Motor neuron (in vitro differentiated cells): ENCODE measurements at regions of chr1 and their contacts with region 1.

Region 1: GRCh38 chr1:17922833-17923232 is 167.7 kb downstream of the ACTL8 start:
- ATAC-seq: peak in 3 of 8 experiments; percentile 47 to 51 (median 50)
- H3K4me3 ChIP-seq: no peak overlapping the region
- H3K27ac ChIP-seq: no peak overlapping the region
- H3K4me1 ChIP-seq: peaks cover 2 to 16% of the 10 kb centered on the region in 2 donors

Region 2: GRCh38 chr1:16351466-16351993 is 1571.3 kb before region 1 on chr1:
- in situ Hi-C with region 1: no loop called
- ATAC-seq: peak in 2 of 8 experiments; percentile 1 to 4
- H3K4me3 ChIP-seq: peak overlapping the region; percentile 72 to 96 (median 87)
- H3K27ac ChIP-seq: peak overlapping the region; percentile 91 to 95
- H3K4me1 ChIP-seq: peaks cover 21% of the 10 kb centered on the region in 2 donors

Region 3: GRCh38 chr1:17551755-17552234 is 371.0 kb before region 1 on chr1:
- in situ Hi-C with region 1: no loop called
- ATAC-seq: peak; percentile 55 to 88 (median 72)
- H3K4me3 ChIP-seq: no peak overlapping the region
- H3K27ac ChIP-seq: no peak overlapping the region
- H3K4me1 ChIP-seq: peaks cover 23 to 27% of the 10 kb centered on the region in 2 donors

Region 4: DNA sequence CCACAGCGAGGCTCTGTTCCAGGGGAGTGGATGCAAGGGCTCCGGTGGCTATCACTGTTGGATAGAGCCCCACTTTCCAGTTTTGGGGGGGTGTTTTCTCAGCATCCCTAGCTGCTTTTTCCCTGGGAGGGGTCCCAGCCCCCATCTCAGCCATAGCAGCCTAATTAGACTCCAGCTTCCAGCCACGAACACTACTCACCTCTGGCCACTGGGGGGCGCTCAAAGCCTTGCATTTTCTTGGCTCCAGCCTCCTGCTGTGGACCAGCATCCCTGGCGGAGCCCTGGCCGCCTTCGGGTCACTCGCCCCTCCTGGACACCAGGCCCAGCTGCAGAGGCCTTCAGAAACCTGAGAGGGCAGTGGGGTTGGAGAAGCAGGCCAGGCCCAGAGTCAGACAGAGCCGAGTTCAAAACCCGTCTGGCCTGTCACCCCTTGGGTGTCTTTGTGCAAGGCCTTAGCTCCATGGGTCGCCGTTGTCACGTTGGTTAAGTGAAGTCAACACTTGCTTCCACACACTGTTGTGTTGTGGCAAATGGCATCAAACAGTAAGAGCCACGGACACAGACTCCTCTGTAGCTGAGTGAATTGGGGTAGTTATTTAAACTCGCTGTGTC is 261.2 kb before region 1 on chr1:
- in situ Hi-C with region 1: loop called in 1 of 9 experiments (anchors 25 kb)
- ATAC-seq: peak; percentile 54 to 88 (median 80)
- H3K4me3 ChIP-seq: no peak overlapping the region
- H3K27ac ChIP-seq: no peak overlapping the region
- H3K4me1 ChIP-seq: no peaks in the 10 kb centered on the region

Region 5: GRCh38 chr1:18091660-18092446 is 169.0 kb after region 1 on chr1:
- in situ Hi-C with region 1: loop called in 1 of 9 experiments (anchors 25 kb)
- ATAC-seq: peak; percentile 33 to 78 (median 51)
- H3K4me3 ChIP-seq: no peak overlapping the region
- H3K27ac ChIP-seq: no peak overlapping the region
- H3K4me1 ChIP-seq: peaks cover 0 to 14% of the 10 kb centered on the region in 2 donors

Region 6: GRCh38 chr1:18100491-18101063 is 177.7 kb after region 1 on chr1:
- in situ Hi-C with region 1: loop called in 2 of 9 experiments (anchors 25 kb)
- ATAC-seq: peak; percentile 25 to 79 (median 68)
- H3K4me3 ChIP-seq: no peak overlapping the region
- H3K27ac ChIP-seq: no peak overlapping the region
- H3K4me1 ChIP-seq: peaks cover 0 to 9% of the 10 kb centered on the region in 2 donors

Region 7: GRCh38 chr1:18217398-18218043 is 294.7 kb after region 1 on chr1:
- in situ Hi-C with region 1: loop called in 2 of 9 experiments (anchors 25 kb)
- ATAC-seq: peak in 3 of 8 experiments; percentile 20 to 59 (median 41)
- H3K4me3 ChIP-seq: no peak overlapping the region
- H3K27ac ChIP-seq: no peak overlapping the region
- H3K4me1 ChIP-seq: peaks cover 0 to 7% of the 10 kb centered on the region in 2 donors

Region 8: GRCh38 chr1:18234790-18235242 is 312.0 kb after region 1 on chr1:
- in situ Hi-C with region 1: loop called in 1 of 9 experiments (anchors 25 kb)
- ATAC-seq: peak in 5 of 8 experiments; percentile 38 to 97 (median 84)
- H3K4me3 ChIP-seq: no peak overlapping the region
- H3K27ac ChIP-seq: no peak overlapping the region
- H3K4me1 ChIP-seq: peaks cover 0 to 5% of the 10 kb centered on the region in 2 donors

Region 9: GRCh38 chr1:18556364-18556763 is 633.5 kb after region 1 on chr1:
- in situ Hi-C with region 1: loop called in 1 of 9 experiments (anchors 25 kb)
- ATAC-seq: peak in 2 of 8 experiments; percentile 20 to 66
- H3K4me3 ChIP-seq: no peak overlapping the region
- H3K27ac ChIP-seq: no peak overlapping the region
- H3K4me1 ChIP-seq: peaks cover 10 to 21% of the 10 kb centered on the region in 2 donors